ENCODE measurements at regions of chr14 and their contacts with region 1.

Region 1: GRCh38 chr14:72904840-72905561 is 11.1 kb upstream of the DPF3 start:
- DNase-seq: peak; percentile 83
- ATAC-seq: peak; percentile 66
- H3K4me3 ChIP-seq: no peak overlapping the region
- H3K4me3 Mint-ChIP-seq: no peak overlapping the region
- H3K27ac ChIP-seq: no peak overlapping the region
- H3K27ac Mint-ChIP-seq: peak overlapping the region; percentile 4
- H3K4me1 ChIP-seq: peaks cover 7 to 22% of the 10 kb centered on the region in 2 donors
- H3K4me1 Mint-ChIP-seq: peaks cover 13% of the 10 kb centered on the region
- H3K27me3 ChIP-seq: no peaks in the 10 kb centered on the region
- H3K27me3 Mint-ChIP-seq: no peaks in the 10 kb centered on the region
- CTCF ChIP-seq: peak; percentile 97

Region 2: DNA sequence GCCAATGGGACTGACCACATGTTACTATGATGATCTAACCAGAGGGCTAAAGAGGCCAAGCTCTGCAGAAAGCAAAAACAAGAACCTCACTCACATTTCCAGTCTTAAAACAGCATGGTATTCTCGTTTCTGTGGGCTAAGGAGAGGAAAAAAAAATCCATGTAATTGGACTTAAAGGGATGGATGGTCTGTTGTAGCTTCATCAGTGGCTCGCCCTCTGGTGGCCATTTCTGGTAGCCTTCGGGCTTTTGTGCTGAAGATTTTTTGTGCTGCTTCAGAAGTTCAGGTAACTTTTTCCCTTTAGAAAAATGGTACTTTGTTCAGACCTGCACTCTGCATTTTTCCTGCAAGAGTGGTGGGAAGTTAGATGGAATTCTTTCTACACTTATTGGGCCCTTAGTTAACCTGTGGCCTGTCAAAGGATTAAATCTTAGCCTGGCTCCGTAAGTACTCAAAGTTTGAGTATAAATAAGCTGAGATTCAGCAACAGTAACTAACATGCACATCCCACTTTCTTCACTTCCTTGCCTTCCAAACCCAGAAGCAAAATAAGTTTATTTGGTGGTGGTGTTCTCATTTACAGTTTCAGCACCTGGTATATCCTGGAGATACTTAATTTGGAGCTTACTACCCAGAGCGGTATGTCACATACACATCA is 43.6 kb after region 1 on chr14:
- CTCF ChIA-PET with region 1: interaction called, 57 read pairs
- POLR2A ChIA-PET with region 1: no interaction called
- intact Hi-C with region 1: no loop called
- DNase-seq: peak; percentile 71
- ATAC-seq: peak; percentile 43
- H3K4me3 ChIP-seq: no peak overlapping the region
- H3K4me3 Mint-ChIP-seq: no peak overlapping the region
- H3K27ac ChIP-seq: no peak overlapping the region
- H3K27ac Mint-ChIP-seq: peak overlapping the region; percentile 8
- H3K4me1 ChIP-seq: no peaks in the 10 kb centered on the region
- H3K4me1 Mint-ChIP-seq: no peaks in the 10 kb centered on the region
- H3K27me3 ChIP-seq: no peaks in the 10 kb centered on the region
- H3K27me3 Mint-ChIP-seq: no peaks in the 10 kb centered on the region
- CTCF ChIP-seq: peak; percentile 89

Region 3: DNA sequence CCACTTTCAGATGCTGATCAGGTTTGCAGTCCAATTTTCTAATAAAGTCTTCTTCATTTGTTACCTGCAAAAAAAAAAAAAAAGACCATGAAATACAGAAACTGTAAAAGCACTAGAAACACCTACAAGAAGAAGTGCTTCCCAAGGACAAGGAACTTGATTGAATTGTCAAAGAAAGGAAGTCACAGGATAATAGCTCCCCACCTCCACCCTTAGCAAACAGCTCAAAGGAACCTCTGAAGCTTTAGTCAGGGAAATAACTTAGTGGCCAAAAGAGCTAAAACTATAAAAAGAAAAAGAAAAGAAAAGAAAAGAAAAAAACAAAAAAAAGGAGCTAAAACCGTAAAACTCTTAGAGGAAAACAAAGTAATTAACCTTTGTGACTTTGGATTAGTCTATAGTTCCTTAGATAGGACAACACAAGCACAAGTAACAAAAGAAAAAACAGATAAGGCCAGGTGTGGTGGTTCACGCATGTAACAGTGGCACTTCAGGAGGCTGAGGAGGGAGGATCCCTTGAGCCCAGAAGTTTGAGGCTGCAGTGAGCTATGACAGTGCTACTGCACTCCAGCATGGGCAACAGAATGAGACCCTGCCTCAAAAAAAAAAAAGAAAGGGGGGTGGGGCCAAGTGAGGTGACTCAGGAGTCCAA is 93.4 kb after region 1 on chr14:
- CTCF ChIA-PET with region 1: no interaction called
- POLR2A ChIA-PET with region 1: interaction called, 10 read pairs
- intact Hi-C with region 1: no loop called
- DNase-seq: no peak
- ATAC-seq: no peak
- H3K4me3 ChIP-seq: no peak overlapping the region
- H3K4me3 Mint-ChIP-seq: no peak overlapping the region
- H3K27ac ChIP-seq: no peak overlapping the region
- H3K27ac Mint-ChIP-seq: no peak overlapping the region
- H3K4me1 ChIP-seq: no peaks in the 10 kb centered on the region
- H3K4me1 Mint-ChIP-seq: peaks cover 2% of the 10 kb centered on the region
- H3K27me3 ChIP-seq: no peaks in the 10 kb centered on the region
- H3K27me3 Mint-ChIP-seq: no peaks in the 10 kb centered on the region
- CTCF ChIP-seq: no peak